BJ (cell line): ENCODE measurements at regions of chr1 and their contacts with region 1.

Region 1: DNA sequence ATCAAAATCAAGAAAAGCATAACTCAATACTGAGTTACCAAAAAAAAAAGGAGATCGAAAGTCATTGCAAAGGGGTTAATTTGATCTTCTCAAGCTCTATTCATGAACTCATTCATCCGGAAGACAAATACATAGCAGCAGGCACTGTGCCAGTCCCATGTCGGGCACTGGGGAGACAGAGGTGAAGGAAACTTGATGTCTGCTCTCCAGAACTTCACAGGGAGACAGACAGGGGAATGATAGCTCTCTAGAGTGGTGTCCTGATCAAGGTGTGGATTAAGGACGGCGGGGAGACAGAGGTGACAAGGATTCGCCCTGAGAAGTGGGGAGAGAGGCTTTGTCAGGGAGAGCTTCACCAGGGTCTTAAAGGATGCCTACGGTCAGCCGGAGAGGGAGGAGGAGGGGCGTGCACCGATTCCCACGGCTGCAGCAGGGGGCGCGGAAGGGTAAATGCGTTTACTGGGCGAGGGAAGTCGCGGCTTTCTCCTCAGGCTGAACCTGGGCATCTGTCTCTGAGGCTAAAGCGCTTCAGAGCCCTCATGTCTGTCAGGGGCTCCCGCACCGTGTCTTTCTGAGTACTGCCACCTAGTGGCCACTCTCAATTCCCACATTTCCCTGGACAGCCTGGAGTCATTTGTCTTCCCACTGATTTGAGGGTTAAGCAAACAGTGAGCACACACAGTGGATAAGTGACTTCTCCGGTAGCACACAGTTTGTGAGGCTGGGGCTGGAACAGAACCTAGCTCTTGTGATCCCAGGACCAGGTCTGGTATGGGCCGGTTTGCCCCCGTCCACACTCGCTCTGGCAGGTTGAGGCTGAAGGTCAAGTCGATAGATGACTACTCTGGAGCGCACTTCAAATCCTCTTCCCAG is 152.8 kb downstream of the TENT5C start:
- DNase-seq: peak; percentile 26
- H3K4me3 ChIP-seq: peak overlapping the region; percentile 34
- H3K27me3 ChIP-seq: no peaks in the 10 kb centered on the region
- CTCF ChIP-seq: peak; percentile 84

Region 2: GRCh38 chr1:117388328-117388727 is 370.4 kb before region 1 on chr1:
- CTCF ChIA-PET with region 1: no interaction called
- POLR2A ChIA-PET with region 1: no interaction called
- DNase-seq: no peak
- H3K4me3 ChIP-seq: no peak overlapping the region
- H3K27me3 ChIP-seq: no peaks in the 10 kb centered on the region
- CTCF ChIP-seq: no peak

Region 3: GRCh38 chr1:117512743-117513321 is 245.8 kb before region 1 on chr1:
- CTCF ChIA-PET with region 1: interaction called, 40 read pairs
- POLR2A ChIA-PET with region 1: no interaction called
- DNase-seq: no peak
- H3K4me3 ChIP-seq: no peak overlapping the region
- H3K27me3 ChIP-seq: no peaks in the 10 kb centered on the region
- CTCF ChIP-seq: peak; percentile 50

Region 4: DNA sequence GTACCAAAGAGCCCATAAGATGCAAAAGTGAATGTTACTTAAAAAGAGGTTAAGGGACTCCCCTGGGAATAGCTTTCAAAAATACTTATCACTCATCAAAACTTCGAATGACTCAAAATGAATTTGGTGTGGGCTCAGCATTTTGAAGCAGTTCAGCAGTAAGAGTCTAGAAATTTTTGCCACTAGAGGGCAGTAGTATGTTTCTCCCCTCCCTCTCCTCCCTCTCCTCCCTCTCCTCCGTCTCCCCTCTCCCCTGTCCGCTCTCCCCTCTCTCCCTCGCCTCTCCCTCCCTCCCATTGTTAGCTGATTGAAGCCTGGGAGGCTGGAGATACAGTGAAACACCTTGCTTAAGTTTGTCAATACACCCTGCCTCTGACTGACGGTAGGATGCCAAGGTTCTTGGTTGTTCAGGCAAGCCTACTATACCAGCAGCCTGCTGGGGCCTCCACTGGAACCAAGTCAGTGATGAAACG is 223.6 kb before region 1 on chr1:
- CTCF ChIA-PET with region 1: interaction called, 142 read pairs
- POLR2A ChIA-PET with region 1: no interaction called
- DNase-seq: no peak
- H3K4me3 ChIP-seq: no peak overlapping the region
- H3K27me3 ChIP-seq: no peaks in the 10 kb centered on the region
- CTCF ChIP-seq: peak; percentile 68

Region 5: DNA sequence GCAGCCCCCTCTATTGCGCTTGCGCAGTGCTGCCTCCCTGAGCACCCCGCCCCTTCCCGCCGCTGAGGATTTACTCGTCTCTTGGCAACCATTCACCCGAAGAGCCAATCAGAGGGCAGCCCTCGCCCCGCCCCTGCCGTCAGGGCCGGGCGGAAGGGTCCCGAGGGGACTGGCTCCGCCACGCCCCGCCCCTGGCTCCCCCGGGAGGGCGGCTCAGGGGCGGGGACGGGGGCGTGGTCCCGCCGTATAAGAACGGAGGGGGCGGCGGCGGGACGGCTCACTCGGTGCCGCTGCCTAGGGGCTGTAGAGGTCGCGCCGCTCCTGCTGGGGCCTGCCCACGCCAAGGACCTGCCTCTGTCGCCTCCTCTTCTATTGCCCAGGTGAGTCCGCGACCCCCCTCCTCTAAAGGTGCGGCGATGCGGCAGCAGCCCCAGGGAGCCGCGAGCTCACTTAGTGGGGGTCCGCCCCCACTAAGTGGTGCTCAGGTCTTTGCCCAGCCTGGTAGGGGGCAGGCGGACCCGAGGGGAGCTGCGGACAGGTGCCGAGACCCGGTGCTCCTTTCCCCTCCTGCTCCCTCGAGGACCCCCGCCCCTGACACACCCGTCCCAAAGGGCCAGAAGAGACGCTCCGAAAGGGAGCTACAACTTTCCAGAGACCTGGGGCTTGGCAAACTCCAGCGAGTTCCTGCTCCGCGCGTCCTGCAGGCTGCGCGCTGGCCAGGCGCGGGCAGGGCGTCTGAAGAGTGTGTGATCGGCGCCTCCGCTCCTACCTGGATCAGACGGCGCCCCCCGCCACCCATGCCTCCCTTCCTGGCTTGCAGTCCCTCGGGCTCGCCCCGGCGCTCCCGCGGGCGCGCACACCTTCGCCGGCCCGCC is 152.7 kb before region 1 on chr1 and contains the start of gene TENT5C:
- CTCF ChIA-PET with region 1: interaction called, 19 read pairs
- POLR2A ChIA-PET with region 1: no interaction called
- DNase-seq: peak; percentile 76
- H3K4me3 ChIP-seq: peak within 1 kb of the TSS; percentile 77
- H3K27me3 ChIP-seq: peaks cover 2% of the 10 kb centered on the region; the same call in 1 of the 2 replicates
- CTCF ChIP-seq: no peak
- polyA plus RNA-seq, gene TENT5C: 1.9 and 2.3 TPM in 2 replicates

Region 6: GRCh38 chr1:117612517-117613248 is 146.0 kb before region 1 on chr1:
- CTCF ChIA-PET with region 1: interaction called, 19 read pairs
- POLR2A ChIA-PET with region 1: no interaction called
- DNase-seq: peak; percentile 49
- H3K4me3 ChIP-seq: no peak overlapping the region
- H3K27me3 ChIP-seq: no peaks in the 10 kb centered on the region
- CTCF ChIP-seq: no peak

Region 7: DNA sequence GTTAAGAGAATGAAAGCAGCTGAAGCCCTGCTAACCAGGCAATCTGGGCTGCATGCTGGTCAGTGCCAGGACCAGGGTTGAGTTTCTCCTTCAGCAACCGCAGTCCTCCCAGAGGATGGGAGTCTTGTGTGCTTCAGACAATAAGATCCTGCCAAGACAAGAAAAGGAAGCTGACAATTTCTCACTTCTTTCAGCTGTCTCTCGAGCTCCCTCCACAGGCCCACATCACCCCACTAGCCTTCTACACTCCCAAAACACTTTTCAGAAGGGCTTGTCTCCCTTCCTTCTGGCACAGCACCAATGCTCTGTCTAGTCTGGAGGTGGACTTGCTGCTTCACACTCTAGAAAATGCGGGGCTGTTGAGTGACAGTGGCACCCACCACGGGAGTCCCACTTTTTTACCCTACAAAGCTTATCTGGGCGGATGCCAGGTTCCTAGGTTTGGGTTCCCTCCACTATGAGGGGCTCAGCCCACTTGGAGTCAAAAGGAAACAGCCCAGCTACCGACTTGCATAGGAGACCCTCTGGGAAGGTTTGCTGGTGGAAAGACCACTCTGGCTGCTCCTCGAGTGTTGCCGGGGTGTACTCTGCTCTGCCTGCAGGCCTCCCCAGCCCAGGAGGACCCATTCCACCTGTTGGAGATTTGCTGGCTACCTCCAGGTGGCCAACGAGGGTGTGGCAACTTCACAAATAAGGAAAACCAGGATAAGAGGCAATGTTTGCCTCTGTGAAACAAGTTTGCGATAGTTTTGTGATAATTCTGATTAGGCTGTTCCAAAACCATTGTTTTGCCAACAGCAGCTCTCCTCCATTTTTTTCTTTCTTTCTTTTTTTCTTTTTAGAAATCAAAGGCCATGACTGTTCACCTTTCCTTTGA is 83.9 kb before region 1 on chr1:
- CTCF ChIA-PET with region 1: no interaction called
- POLR2A ChIA-PET with region 1: no interaction called
- DNase-seq: no peak
- H3K4me3 ChIP-seq: no peak overlapping the region
- H3K27me3 ChIP-seq: no peaks in the 10 kb centered on the region
- CTCF ChIP-seq: peak; percentile 28

Region 8: GRCh38 chr1:117788014-117788413 is 29.3 kb after region 1 on chr1:
- CTCF ChIA-PET with region 1: interaction called, 11 read pairs
- POLR2A ChIA-PET with region 1: no interaction called
- DNase-seq: no peak
- H3K4me3 ChIP-seq: no peak overlapping the region
- H3K27me3 ChIP-seq: no peaks in the 10 kb centered on the region
- CTCF ChIP-seq: no peak

Region 9: GRCh38 chr1:117895482-117896114 is 136.9 kb after region 1 on chr1:
- CTCF ChIA-PET with region 1: interaction called, 82 read pairs
- POLR2A ChIA-PET with region 1: no interaction called
- DNase-seq: peak; percentile 39
- H3K4me3 ChIP-seq: no peak overlapping the region
- H3K27me3 ChIP-seq: no peaks in the 10 kb centered on the region
- CTCF ChIP-seq: peak; percentile 68